Panc1 (cell line): ENCODE measurements at regions of chr4 and their contacts with region 1.

Region 1: GRCh38 chr4:40255393-40256281 is 58.8 kb downstream of the RHOH start:
- DNase-seq: peak; percentile 79
- ATAC-seq: peak; percentile 91
- H3K4me3 ChIP-seq: peak overlapping the region in 1 of 2 experiments; percentile 19; a peak in 1 of 4 replicates
- H3K27ac ChIP-seq: peak overlapping the region; percentile 93
- H3K4me1 ChIP-seq: peaks cover 32% of the 10 kb centered on the region
- H3K27me3 ChIP-seq: no peaks in the 10 kb centered on the region
- CTCF ChIP-seq: no peak

Region 2: DNA sequence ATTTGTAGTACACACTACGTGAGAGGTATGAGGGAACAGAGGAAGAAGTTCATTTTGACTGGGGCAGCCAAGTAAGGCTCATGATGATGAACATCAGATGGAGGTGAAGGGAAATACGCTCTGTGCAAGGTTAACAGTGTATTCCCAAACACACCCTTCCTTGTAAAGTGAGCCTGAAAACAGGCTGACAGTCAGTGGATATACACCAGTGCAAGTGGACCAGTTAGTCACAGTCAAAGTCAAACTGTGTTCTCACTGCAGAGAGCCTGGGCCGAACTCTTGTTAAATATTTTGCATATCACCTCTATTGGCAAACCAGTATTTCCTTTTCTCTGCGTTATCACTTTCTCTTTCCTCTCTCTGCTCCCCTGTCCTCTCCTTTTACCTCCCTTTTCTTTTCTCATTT is 82.2 kb before region 1 on chr4:
- CTCF ChIA-PET with region 1: no interaction called
- POLR2A ChIA-PET with region 1: no interaction called
- in situ Hi-C with region 1: no loop called
- intact Hi-C with region 1: loop called (anchors 10 kb)
- DNase-seq: no peak
- ATAC-seq: no peak
- H3K4me3 ChIP-seq: no peak overlapping the region
- H3K27ac ChIP-seq: no peak overlapping the region; the same call in 1 of the 2 replicates
- H3K4me1 ChIP-seq: peaks cover 14% of the 10 kb centered on the region
- H3K27me3 ChIP-seq: no peaks in the 10 kb centered on the region
- CTCF ChIP-seq: no peak

Region 3: GRCh38 chr4:40369437-40370274 is 114.0 kb after region 1 on chr4:
- CTCF ChIA-PET with region 1: no interaction called
- POLR2A ChIA-PET with region 1: no interaction called
- in situ Hi-C with region 1: no loop called
- intact Hi-C with region 1: no loop called
- DNase-seq: no peak
- ATAC-seq: no peak
- H3K4me3 ChIP-seq: no peak overlapping the region
- H3K27ac ChIP-seq: no peak overlapping the region
- H3K4me1 ChIP-seq: no peaks in the 10 kb centered on the region
- H3K27me3 ChIP-seq: no peaks in the 10 kb centered on the region
- CTCF ChIP-seq: no peak

Region 4: DNA sequence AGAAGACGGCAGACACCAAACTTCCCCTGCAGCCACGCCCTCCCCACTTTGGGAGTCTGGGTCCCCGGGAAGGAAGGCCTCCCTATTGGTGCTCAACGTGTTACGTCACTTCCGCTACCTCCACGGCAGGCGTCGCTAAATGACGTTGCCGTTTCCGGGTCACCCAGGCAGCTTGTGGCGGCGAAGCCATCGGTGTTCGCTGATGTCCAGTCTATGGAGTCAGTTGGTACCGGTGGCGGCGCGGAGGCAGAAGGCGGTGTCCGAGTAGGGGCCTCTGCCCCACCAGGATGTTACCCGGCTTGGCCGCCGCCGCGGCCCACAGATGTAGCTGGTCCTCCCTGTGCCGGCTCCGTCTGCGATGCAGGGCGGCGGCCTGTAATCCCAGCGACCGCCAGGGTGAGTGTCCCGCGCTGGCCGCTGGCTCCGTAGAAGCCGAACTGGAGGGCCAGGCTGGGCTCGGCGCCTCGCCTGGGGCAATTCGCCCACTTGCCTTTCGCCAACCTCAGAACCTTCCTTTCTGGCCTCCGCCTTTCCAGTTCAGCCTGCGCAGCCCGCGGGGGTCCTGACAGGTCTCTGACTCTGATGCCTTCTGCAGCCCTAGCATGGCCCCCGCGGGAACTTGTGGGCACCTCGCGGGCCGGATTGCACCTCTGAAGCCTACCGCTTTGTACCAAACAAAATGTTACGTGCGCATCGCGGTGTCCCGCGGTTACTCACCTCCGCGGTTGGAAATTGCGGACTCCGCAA is 1734.9 kb after region 1 on chr4 and contains the start of gene SLC30A9:
- CTCF ChIA-PET with region 1: no interaction called
- POLR2A ChIA-PET with region 1: no interaction called
- in situ Hi-C with region 1: no loop called
- intact Hi-C with region 1: no loop called
- DNase-seq: peak; percentile 71
- ATAC-seq: peak; percentile 100
- H3K4me3 ChIP-seq: peak within 1 kb of the TSS; percentile 92 to 95
- H3K27ac ChIP-seq: peak within 1 kb of the TSS; percentile 86
- H3K4me1 ChIP-seq: peaks cover 3% of the 10 kb centered on the region; the same call in 1 of the 2 replicates
- H3K27me3 ChIP-seq: no peaks in the 10 kb centered on the region
- CTCF ChIP-seq: peak; percentile 20; the same call in 1 of the 2 replicates
- total RNA-seq, gene SLC30A9: 32.4 TPM